Cardiac septum (tissue), 1 donor: ENCODE measurements at regions of chr13 and their contacts with region 1.

Region 1: GRCh38 chr13:29435125-29435911 is 160.2 kb downstream of the SLC7A1 start:
- DNase-seq: no peak

Region 2: DNA sequence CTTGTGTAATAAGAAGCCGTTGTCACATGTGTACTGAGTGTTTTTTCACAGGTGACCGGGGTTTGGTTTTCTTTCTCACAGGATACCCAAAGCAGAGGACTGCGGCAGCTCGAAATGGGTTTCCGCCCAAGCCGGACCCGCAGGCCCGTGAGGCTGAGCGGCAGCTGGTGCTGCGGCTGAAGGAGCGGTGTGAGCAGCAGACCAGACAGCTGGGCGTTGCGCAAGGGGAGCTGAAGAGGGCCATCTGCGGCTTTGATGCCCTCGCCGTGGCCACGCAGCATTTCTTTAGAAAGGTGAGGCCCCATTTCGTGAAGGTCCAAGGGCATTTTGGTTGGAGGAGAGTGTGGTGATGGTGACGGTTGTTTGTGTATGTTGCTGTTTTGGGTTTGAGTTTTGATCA is 76.1 kb before region 1 on chr13:
- intact Hi-C with region 1: no loop called
- DNase-seq: no peak

Region 3: DNA sequence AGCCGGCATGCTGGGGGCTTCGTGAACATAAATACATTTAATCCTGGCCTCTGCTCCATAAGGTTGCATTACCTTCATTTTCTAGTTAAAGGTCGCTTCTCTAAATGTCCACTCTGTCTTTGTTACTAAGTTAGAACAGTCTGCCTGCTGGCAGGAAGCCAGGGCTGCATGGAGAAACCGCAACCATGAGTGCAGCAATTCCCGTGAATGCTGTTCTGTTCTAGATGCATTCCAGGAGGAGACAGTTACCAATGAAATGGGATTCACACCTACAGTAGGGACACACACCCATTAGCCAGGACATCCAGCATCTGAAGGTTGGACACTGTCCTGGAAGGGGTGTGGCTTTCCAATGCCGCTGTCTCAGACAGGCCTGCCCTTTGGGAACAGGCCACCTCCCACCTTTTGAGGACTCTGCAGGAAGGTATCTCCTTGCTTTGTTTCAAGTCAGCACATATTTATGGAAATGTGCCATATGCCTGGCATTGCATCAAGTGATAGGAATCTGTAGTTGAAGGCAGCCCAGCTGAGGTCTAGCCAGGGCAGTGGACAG is 30.5 kb after region 1 on chr13:
- intact Hi-C with region 1: loop called (anchors 2 kb)
- DNase-seq: no peak

Region 4: DNA sequence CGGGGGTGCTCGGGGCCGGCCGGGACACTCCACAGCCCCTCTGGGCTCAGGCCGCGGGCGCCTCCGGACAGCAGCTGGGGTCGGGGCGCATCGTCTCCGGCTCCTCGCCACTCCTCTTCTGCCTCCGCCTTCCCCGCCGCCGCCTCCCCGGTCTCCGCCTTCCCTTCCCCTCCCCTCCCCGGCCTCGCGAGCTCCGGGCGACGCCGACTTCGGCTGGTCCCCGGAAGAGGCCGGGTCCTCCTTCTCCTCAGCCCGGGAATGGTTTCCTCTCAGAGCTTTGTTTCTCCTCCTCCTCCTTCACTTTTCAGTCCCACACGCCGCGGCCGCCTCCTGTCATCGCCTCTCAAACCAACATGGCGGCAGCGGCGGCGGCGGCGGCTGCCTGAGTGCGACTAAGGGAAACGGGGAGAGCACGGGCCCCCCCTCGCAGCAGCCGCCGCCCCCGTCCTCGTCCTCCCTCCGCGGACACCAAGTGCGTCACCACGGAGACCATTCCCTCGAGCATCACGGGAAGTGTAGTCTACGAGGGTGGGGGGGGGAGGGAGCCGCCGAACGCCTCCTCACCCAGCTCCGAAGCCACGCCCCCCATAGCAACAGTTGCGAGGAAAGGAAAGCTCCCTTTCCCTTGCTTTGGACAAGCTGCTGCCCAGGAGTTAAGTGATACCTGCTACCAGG is 415.0 kb after region 1 on chr13 and contains the start of gene UBL3:
- intact Hi-C with region 1: no loop called
- DNase-seq: peak; percentile 99
- total RNA-seq, gene UBL3: 24.1 TPM